MCF 10A (cell line): ENCODE measurements at regions of chr13 and their contacts with region 1.

Region 1: DNA sequence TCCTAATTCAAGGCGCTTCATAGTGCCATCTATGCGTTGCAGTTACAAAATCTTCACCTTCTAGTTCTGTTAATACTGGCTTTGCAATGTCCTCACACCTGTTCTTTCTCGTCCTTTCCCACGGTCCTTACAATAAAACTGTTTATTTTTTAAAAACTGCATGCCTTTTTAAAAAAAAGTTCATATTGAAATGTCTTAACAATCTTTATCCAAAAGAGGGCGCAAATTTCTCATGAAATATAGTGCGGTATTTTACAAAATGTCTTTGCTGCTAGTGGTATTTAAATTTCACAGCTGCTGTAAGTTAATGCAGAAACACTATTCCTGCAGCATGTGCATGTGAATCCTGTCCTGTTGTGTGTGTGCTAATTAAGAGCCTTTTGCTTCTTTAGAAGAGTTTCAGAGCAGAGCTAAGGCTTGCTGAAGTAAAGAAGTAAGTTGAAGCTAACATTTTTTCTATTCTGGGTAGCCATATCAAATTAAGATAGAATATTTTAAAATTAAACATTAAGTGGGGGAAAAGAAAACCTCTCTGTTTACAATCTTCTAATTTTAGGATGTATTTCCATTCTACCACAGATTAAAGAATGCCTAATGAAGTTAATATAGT is 15.8 kb upstream of the CLDN10 start:
- DNase-seq: peak; percentile 68
- H3K4me3 Mint-ChIP-seq: no peak overlapping the region
- H3K27ac Mint-ChIP-seq: no peak overlapping the region
- H3K4me1 Mint-ChIP-seq: peaks cover 30% of the 10 kb centered on the region
- H3K27me3 Mint-ChIP-seq: no peaks in the 10 kb centered on the region
- CTCF ChIP-seq: peak; percentile 42

Region 2: GRCh38 chr13:95301183-95301967 is 235.4 kb before region 1 on chr13 and contains the start of gene ABCC4:
- CTCF ChIA-PET with region 1: no interaction called
- POLR2A ChIA-PET with region 1: no interaction called
- intact Hi-C with region 1: loop called (anchors 2 kb)
- DNase-seq: peak; percentile 66
- H3K4me3 Mint-ChIP-seq: peak within 1 kb of the TSS; percentile 75
- H3K27ac Mint-ChIP-seq: peak within 1 kb of the TSS; percentile 41
- H3K4me1 Mint-ChIP-seq: peaks cover 10% of the 10 kb centered on the region
- H3K27me3 Mint-ChIP-seq: no peaks in the 10 kb centered on the region
- CTCF ChIP-seq: no peak
- total RNA-seq, gene ABCC4: 13.8 and 13.9 TPM in 2 replicates

Region 3: DNA sequence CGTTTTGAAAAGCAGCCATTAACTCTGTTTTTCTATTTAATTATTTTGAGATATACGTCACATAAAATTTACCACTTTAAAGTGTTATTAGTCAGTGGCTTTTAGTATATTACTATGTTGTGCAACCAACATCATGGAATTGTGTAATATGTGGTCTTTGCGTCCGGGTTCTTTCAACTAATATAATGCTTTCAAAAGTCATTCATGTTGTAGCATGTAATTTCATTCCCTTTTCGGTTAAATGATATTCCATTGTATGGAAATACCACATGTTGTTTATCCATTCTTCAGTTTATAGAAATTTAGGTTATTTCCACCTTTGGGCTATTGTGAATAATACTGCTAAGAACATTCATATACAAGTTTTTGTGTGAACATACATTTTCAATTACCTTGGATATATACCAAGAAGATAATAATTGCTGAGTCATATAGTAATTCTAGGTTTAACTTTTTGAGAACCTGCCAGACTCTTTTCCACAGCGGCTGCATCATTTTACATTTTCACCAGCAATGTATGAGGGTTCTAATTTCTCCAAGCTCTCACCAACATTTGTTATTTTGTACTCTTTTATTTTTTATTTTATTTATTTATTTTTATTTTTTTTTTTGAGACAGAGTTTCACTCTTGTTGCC is 12.4 kb before region 1 on chr13:
- CTCF ChIA-PET with region 1: interaction called, 29 read pairs
- POLR2A ChIA-PET with region 1: interaction called, 4 read pairs
- intact Hi-C with region 1: no loop called
- DNase-seq: peak; percentile 95
- H3K4me3 Mint-ChIP-seq: no peak overlapping the region
- H3K27ac Mint-ChIP-seq: peak overlapping the region; percentile 82
- H3K4me1 Mint-ChIP-seq: peaks cover 24% of the 10 kb centered on the region
- H3K27me3 Mint-ChIP-seq: no peaks in the 10 kb centered on the region
- CTCF ChIP-seq: no peak

Region 4: GRCh38 chr13:95573226-95573625 is 36.5 kb after region 1 on chr13:
- CTCF ChIA-PET with region 1: interaction called, 16 read pairs
- POLR2A ChIA-PET with region 1: no interaction called
- intact Hi-C with region 1: no loop called
- DNase-seq: peak; percentile 99
- H3K4me3 Mint-ChIP-seq: no peak overlapping the region
- H3K27ac Mint-ChIP-seq: peak overlapping the region; percentile 49
- H3K4me1 Mint-ChIP-seq: peaks cover 28% of the 10 kb centered on the region
- H3K27me3 Mint-ChIP-seq: no peaks in the 10 kb centered on the region
- CTCF ChIP-seq: no peak

Region 5: DNA sequence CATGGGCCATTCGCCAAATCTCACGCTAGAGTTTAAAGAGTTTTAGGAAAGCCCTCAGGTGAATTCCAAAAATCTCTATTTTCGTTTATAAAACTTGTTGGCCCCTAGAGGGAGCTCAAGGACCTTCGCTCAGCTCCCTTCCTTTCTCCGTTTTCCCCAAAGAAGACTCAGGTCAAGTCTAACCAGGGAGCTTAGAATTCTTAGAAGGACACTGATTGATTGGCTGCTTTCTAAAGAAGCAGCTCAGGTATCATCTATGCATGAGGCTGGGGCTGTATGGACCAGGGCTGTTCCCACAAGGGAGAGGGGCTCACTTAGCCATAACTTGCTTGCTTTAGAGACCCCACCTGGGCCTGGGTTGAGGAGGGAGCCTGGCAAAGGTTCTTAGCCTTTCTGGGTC is 87.3 kb after region 1 on chr13:
- CTCF ChIA-PET with region 1: interaction called, 30 read pairs
- POLR2A ChIA-PET with region 1: interaction called, 3 read pairs
- intact Hi-C with region 1: loop called (anchors 2 kb)
- DNase-seq: peak; percentile 81
- H3K4me3 Mint-ChIP-seq: no peak overlapping the region
- H3K27ac Mint-ChIP-seq: no peak overlapping the region
- H3K4me1 Mint-ChIP-seq: no peaks in the 10 kb centered on the region
- H3K27me3 Mint-ChIP-seq: no peaks in the 10 kb centered on the region
- CTCF ChIP-seq: peak; percentile 73